Activated CD4-positive, alpha-beta memory T cell treated with anti-CD3 and anti-CD28 coated beads, Interleukin-2, amount 10 ng/mL, durations not matched to agents 7 days and 5 days (primary cell): ENCODE measurements at regions of chrX and their contacts with region 1.

Region 1: GRCh38 chrX:141278302-141278701 is 36.0 kb upstream of the SPANXC start:
- DNase-seq: peak; percentile 16
- H3K4me3 Mint-ChIP-seq: no peak overlapping the region
- H3K27ac Mint-ChIP-seq: no peak overlapping the region
- H3K4me1 Mint-ChIP-seq: no peaks in the 10 kb centered on the region
- H3K27me3 Mint-ChIP-seq: no peaks in the 10 kb centered on the region

Region 2: GRCh38 chrX:140766024-140766611 is 512.2 kb before region 1 on chrX:
- CTCF ChIA-PET with region 1: interaction called, 16 read pairs
- POLR2A ChIA-PET with region 1: no interaction called
- DNase-seq: peak; percentile 45
- H3K4me3 Mint-ChIP-seq: peak overlapping the region; percentile 63
- H3K27ac Mint-ChIP-seq: no peak overlapping the region
- H3K4me1 Mint-ChIP-seq: peaks cover 13% of the 10 kb centered on the region
- H3K27me3 Mint-ChIP-seq: peaks cover 8% of the 10 kb centered on the region

Region 3: DNA sequence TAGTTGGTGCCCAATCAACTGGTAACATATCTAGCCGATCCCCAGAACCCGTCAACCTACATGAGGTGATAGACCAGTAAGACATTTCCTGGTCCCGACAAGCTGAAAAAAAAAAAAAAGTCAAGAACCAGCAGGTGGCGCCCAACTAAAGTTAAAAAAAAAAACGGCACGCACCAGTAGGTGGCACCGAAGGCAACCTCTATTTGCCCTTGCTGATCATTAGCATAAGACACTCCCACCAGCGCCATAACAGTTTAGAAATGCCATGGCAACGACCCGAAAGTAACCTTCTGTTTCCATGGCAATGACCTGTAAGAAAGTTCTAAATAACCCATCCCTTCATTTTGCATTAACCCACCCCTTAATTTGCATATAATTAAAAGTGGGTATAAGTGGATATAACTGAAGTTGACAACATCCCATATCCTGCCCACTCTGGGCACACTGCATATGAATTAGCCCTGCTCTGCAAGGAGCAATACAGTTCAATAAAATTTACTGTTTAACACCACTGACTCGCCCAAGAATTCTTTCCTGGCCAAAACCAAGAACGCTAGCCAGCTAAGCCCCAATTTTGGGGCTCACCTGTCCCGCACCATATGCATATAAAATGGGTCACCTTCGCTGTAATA is 359.8 kb before region 1 on chrX:
- CTCF ChIA-PET with region 1: interaction called, 11 read pairs
- POLR2A ChIA-PET with region 1: no interaction called
- DNase-seq: peak; percentile 51
- H3K4me3 Mint-ChIP-seq: no peak overlapping the region
- H3K27ac Mint-ChIP-seq: peak overlapping the region; percentile 93
- H3K4me1 Mint-ChIP-seq: peaks cover 32% of the 10 kb centered on the region
- H3K27me3 Mint-ChIP-seq: no peaks in the 10 kb centered on the region